ENCODE measurements at regions of chr16 and their contacts with region 1.

Region 1: DNA sequence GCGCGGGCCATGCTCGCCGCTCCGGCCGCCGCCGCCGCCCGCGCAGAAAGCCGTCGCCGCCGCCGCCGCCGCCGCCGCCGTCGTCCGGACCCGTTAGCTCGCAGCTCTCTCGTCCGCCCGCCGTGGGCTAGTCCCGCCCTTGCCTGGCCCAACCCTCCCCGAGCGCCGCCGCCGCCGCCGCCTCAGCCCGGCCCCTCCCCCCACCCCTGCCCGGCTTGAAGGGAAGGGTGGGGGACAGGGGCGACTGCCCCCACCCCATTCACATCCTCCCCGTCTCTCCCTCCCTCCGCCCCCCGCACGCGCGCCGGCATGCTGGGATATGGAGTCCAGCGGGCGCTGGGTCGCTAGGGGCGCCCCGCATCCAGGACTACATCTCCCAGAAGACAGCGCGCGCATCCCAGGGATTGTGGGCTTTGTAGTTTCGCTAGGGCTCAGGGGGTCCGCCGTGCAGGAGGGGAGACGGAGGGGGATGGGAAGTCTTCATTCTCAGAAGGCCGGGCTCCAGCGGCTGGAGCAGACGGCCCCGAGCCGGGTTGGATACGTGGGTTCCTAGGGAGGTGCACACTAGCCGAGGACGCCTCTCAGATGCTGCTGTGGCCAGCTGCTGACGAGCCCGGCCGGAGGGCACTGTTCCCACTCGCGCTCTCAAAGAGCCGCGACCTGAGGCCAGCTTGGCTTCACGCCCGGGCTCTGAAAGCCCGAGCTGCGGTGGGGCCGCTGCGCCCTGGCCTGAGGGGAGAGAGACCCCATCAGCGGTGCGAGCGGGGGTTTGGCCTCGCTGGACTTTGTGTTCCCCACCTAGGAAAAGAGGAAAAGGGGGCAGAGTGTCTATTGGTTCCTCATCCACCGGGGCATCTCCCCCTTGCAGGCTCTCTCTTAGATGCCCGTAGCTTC is at the start of gene ST3GAL2:
- DNase-seq: peak; percentile 96
- H3K4me3 ChIP-seq: peak within 1 kb of the TSS; percentile 90
- H3K27ac ChIP-seq: peak within 1 kb of the TSS; percentile 88
- H3K4me1 ChIP-seq: peaks cover 49% of the 10 kb centered on the region
- H3K27me3 ChIP-seq: no peaks in the 10 kb centered on the region
- CTCF ChIP-seq: no peak
- total RNA-seq, gene ST3GAL2: 22.3 TPM

Region 2: GRCh38 chr16:70276392-70276791 is 162.8 kb before region 1 on chr16:
- intact Hi-C with region 1: no loop called
- DNase-seq: no peak
- H3K4me3 ChIP-seq: no peak overlapping the region
- H3K27ac ChIP-seq: no peak overlapping the region
- H3K4me1 ChIP-seq: peaks cover 9% of the 10 kb centered on the region
- H3K27me3 ChIP-seq: no peaks in the 10 kb centered on the region
- CTCF ChIP-seq: no peak

Region 3: DNA sequence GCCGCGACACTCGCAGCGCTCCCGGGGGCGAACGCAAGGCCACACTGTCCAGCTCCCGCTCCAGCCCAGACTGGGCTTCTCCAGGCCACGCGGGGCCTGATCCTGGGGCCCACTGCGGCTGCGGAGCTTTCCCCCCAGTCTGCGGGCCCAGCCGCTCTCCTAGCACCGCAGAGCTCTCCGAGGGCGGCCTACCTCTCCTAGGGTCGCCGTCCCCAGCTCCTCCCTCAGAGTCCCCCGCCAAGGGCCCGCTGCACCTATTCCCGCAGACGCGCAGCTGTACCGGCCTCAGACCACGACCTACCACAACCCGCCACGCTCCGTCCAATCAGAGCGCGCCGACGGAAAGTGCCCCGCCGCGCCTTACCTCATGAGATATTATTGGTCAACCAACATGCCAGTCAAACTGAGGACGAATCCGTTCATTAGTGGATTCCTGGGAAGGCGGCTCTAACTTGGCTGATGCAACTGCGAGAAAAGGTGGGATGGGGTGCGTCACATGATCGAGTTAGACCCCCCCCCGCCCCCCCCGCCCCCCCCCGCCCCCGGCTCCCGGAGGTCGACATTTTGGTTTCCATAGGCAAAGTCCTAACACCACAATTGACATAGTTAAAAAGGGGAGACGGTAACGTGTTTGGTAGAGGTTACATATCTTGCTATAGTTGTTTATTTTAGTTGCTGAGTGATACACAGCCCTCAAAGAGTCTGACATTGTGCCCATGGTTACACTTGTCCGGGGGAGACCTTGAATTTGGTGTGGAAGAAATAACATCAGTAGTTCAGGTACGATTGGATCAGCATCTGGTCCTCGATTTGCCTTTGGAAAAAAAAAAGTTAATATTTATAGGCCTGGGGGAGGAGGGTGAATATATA is 149.8 kb before region 1 on chr16 and contains the start of gene AARS1:
- intact Hi-C with region 1: no loop called
- DNase-seq: peak; percentile 97
- H3K4me3 ChIP-seq: peak within 1 kb of the TSS; percentile 94
- H3K27ac ChIP-seq: peak within 1 kb of the TSS; percentile 96
- H3K4me1 ChIP-seq: peaks cover 25% of the 10 kb centered on the region
- H3K27me3 ChIP-seq: no peaks in the 10 kb centered on the region
- CTCF ChIP-seq: no peak
- total RNA-seq, gene AARS1: 61.0 TPM

Region 4: GRCh38 chr16:70380861-70381603 is 58.2 kb before region 1 on chr16:
- intact Hi-C with region 1: loop called (anchors 10 kb)
- DNase-seq: peak; percentile 97
- H3K4me3 ChIP-seq: peak overlapping the region; percentile 78
- H3K27ac ChIP-seq: peak overlapping the region; percentile 87
- H3K4me1 ChIP-seq: peaks cover 27% of the 10 kb centered on the region
- H3K27me3 ChIP-seq: no peaks in the 10 kb centered on the region
- CTCF ChIP-seq: peak; percentile 50

Region 5: DNA sequence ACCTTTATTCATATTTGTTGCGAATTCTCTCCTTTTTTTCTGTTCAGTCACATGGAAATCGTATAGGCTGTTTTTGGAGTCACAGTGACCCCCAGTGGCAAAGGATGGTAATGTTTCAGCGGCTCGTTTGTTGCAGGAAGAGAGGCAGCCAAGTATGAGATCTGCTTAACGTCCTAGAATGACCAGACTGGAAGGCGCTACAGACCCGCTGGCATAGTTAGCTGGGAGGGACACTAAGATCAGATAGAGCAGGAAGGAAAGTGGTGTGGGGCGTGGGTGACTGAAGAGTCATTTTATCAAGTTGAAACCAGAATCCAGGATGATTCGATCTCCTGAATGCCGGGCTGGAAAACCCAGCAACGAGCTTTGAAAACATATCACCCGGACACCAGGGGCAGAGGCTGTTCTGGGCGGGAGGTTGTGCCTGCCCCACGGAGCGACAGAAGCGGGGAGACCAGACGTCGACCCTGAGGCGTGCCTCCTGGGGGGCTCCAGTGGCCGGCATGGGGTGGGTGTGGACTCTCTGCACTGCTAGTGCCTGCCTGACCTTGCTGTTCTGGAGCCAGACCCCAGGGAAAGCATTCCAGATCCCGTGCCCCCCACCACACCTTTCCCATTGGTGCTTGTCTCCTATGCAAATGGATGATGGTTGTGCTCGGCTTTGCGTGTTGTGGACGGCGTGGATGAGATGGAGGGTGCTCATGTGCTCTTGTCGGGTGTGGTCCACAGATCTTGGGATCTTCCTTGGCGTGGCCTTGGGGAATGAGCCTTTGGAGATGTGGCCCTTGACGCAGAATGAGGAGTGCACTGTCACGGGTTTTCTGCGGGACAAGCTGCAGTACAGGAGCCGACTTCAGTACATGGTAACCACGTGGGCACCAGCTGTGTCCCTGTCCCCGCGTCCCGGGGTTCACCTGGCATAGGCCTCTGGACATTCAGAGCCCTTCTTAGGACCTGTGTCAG is 214.9 kb after region 1 on chr16:
- intact Hi-C with region 1: no loop called
- DNase-seq: peak; percentile 79
- H3K4me3 ChIP-seq: peak overlapping the region; percentile 58
- H3K27ac ChIP-seq: peak overlapping the region; percentile 61
- H3K4me1 ChIP-seq: peaks cover 10% of the 10 kb centered on the region
- H3K27me3 ChIP-seq: no peaks in the 10 kb centered on the region
- CTCF ChIP-seq: peak; percentile 94

Measured in left ventricle myocardium inferior (tissue), 1 donor.